Endothelial cell of umbilical vein (primary cell): ENCODE measurements at regions of chr20 and their contacts with region 1.

Region 1: DNA sequence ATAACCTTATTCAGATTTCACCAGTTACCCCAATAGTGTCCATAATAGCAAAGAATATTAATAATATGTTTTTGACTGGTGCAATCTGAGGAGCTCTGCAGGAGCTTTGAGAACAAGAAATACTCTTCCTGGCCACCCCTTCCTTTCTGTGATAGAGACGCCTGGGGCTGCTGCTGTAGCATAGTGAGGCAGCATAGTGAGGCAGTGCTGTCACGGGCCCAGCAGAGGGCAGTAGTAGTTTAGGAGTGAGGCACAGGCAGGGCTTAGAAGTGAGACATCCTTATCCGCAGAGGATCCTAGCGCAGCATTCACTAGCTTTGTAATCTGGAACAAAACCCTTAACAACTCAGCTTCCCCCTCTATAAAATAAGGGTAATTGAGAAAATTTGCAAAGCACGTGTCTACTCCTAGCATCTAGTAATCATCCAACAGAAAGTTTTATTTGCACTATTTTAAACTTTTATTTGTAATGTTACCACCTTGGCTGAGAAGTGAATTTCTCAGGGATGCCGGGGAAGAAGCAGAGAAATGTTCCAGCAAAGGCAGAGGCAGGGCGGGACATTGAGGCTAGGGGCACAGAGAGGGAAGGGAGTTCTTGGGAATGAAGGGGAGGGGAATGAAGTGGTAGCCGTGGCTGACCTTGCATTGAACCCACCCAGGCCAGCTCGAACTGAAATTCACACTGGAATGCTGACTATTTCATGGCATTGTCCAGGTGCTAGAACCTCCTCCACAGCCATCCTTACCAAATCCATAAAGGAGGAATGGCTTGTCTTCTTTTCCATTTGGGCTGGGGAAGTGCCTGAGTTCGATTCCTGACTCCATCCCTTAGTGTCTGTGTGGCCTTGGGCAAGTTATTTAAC is 78.8 kb downstream of the CDS2 start:
- DNase-seq: peak; percentile 78
- H3K4me3 ChIP-seq: no peak overlapping the region
- H3K27ac ChIP-seq: no peak overlapping the region
- H3K4me1 ChIP-seq: no peaks in the 10 kb centered on the region
- H3K27me3 ChIP-seq: no peaks in the 10 kb centered on the region
- CTCF ChIP-seq: peak; percentile 93
- POLR2A ChIP-seq: no peak

Region 2: DNA sequence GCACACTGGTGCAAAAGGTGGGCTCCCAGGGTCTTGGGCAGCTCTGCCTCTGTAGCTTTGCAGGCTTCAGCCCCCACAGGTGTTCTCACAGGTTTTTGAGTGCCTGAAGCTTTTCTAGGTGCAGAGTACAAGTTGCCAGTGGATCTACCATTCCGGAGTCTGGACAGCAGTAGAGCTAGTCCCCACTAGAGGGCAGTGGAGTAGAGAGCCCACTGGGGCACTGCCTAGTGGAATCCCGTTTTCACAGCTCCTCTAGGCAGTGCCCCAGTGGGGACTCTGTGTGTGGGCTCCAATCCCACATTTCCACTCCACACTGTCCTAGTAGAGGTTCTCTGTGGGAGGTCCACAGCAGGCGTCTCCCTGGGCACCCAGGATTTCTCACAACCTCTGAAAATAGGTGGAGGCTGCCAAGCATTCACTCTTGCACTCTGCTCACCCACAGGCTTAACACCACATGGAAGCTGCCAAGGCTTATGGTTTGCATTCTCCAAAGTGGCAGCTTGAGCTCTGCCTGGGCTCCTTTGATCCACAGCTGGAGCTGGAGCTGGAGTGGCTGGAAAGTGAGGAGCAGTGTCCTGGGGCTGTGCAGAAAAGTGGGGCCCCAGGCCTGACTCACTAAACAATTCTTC is 197.4 kb after region 1 on chr20:
- CTCF ChIA-PET with region 1: interaction called, 10 read pairs
- POLR2A ChIA-PET with region 1: no interaction called
- dilution Hi-C with region 1: no loop called
- intact Hi-C with region 1: loop called (anchors 1 kb)
- DNase-seq: peak; percentile 30
- H3K4me3 ChIP-seq: no peak overlapping the region
- H3K27ac ChIP-seq: no peak overlapping the region
- H3K4me1 ChIP-seq: no peaks in the 10 kb centered on the region
- H3K27me3 ChIP-seq: no peaks in the 10 kb centered on the region
- CTCF ChIP-seq: peak; percentile 55 to 81
- POLR2A ChIP-seq: no peak